Posterior cingulate gyrus (tissue), 11 donors: ENCODE measurements at regions of chr3 and their contacts with region 1.

Region 1: GRCh38 chr3:141452036-141452435 is 34.8 kb upstream of the RASA2 start:
- DNase-seq: peak in 1 of 10 donors; percentile 44

Region 2: GRCh38 chr3:141303481-141304223 is 148.4 kb before region 1 on chr3:
- intact Hi-C with region 1: loop called (anchors 2 kb)
- DNase-seq: peak in 2 of 10 donors; percentile 15 to 56

Region 3: DNA sequence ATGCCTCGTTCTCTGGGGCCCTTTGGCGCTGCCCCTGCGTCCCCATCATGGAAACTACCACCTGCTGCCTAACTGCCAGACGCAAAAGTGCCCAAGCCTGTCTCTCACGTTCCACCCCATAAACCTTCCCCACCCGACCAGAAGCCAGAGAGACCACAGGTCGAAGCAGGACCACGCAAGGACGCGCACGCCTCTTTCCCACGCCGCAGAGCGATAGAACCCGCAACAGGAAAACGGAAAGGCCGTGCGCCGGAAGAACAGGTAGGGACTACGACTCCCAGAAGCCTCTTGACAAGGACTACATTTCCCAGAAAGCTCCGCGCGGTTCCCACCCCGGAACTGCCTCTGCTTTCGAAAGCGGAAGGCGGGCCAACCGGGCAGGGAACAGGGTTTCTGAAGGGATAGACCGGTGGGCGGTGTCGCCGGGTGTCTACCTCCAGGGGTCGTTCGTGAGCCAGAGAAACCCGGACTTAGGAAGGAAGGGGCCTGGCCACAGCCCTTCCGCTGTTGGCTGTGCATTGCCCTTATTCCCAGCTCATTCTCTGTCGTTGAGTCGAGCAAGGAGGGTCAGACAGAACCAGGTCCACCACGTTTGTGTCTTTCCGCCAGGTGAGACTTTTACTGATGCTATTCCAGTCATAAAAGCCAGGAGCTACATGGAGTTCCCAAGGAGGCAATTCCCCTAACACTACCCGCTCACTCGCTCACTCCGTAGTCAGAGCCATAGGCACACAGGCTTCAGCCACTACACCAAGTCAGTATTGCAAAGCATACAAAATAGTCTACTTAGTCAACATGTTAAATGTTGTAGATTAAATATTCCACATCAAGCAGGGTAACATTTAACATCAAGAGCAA is 140.3 kb before region 1 on chr3:
- intact Hi-C with region 1: loop called (anchors 2 kb)
- DNase-seq: peak; percentile 97 to 100 (median 99)

Region 4: GRCh38 chr3:141360888-141361598 is 91.0 kb before region 1 on chr3:
- intact Hi-C with region 1: loop called (anchors 1 kb)
- DNase-seq: no peak

Region 5: DNA sequence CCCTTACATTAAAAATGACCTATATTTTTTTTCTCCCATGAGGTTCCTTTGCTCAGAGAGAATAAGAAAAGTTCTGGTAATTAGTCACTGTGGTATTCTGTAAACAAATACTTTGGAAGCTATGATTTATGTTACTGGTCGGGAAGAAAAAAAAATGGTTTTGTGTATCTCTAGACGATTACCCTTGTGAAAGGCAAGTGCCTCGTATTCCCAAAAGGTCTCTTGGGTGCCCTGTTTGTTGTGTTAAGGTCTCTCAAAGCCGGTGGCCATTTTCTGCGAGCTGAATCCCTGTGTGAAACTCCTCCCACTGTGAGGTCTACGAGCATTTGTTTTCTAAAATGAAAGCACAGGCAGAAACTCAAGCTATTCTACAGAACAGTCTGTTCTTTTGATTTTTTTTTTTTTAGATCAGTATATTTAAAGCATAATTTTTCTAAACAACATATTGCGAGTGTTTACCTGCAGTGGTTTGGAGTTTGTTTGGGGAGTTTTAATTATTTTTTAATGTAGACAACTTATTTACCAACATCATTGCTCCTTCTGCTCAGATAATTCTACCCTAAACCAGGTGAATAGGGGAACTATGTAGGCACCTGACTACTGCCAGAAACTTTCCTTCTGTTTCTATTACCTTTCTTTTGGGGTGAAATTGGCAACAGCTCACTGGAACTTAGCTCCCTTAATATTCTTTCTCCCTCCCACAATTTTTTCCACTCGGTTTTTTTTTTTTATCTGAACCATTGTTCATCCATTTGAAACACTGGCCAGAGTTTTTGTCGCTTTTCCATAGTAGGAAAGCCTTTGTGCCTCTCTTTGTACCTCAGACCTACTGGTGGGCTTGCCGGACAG is 39.7 kb before region 1 on chr3:
- intact Hi-C with region 1: loop called (anchors 5 kb)
- DNase-seq: peak in 5 of 10 donors; percentile 39 to 58 (median 41)